ENCODE measurements at regions of chr6 and their contacts with region 1.

Region 1: GRCh38 chr6:96760153-96760687 is 77.1 kb downstream of the GPR63 start:
- DNase-seq: no peak
- ATAC-seq: no peak
- H3K4me3 ChIP-seq: no peak overlapping the region
- H3K27ac ChIP-seq: no peak overlapping the region
- H3K4me1 ChIP-seq: no peaks in the 10 kb centered on the region
- H3K27me3 ChIP-seq: no peaks in the 10 kb centered on the region
- CTCF ChIP-seq: no peak; the same call in 1 of the 2 replicates

Region 2: DNA sequence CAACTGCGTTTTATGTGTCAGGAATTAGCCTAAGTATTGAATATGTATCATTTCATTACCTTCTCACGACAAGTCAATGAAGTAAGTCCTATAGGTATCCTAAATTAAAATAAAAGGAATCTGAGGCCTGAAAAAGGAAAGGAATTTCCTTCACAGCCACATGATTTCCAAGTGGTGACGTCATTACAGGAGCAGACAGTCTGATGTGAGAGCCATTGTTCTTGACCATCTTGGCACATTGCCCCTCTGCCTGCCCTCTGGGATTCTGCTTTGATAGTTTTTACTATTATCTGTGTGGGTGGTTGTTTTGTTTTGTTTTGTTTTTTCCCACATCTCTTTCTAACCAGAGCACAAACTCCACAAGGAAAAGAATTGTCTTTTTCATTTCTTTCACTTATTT is 458.4 kb before region 1 on chr6:
- CTCF ChIA-PET with region 1: no interaction called
- POLR2A ChIA-PET with region 1: no interaction called
- in situ Hi-C with region 1: no loop called
- intact Hi-C with region 1: no loop called
- DNase-seq: no peak
- ATAC-seq: no peak
- H3K4me3 ChIP-seq: no peak overlapping the region
- H3K27ac ChIP-seq: no peak overlapping the region
- H3K4me1 ChIP-seq: peaks cover 4% of the 10 kb centered on the region; the same call in 1 of the 2 replicates
- H3K27me3 ChIP-seq: no peaks in the 10 kb centered on the region
- CTCF ChIP-seq: no peak

Region 3: GRCh38 chr6:96626759-96627364 is 133.4 kb before region 1 on chr6:
- CTCF ChIA-PET with region 1: no interaction called
- POLR2A ChIA-PET with region 1: no interaction called
- in situ Hi-C with region 1: no loop called
- intact Hi-C with region 1: loop called (anchors 10 kb)
- DNase-seq: no peak
- ATAC-seq: no peak
- H3K4me3 ChIP-seq: no peak overlapping the region
- H3K27ac ChIP-seq: no peak overlapping the region
- H3K4me1 ChIP-seq: no peaks in the 10 kb centered on the region
- H3K27me3 ChIP-seq: peaks cover 2% of the 10 kb centered on the region; the same call in 1 of the 2 replicates
- CTCF ChIP-seq: peak; percentile 52; the same call in 1 of the 2 replicates